Natural killer cell (primary cell): ENCODE measurements at regions of chr5 and their contacts with region 1.

Region 1: DNA sequence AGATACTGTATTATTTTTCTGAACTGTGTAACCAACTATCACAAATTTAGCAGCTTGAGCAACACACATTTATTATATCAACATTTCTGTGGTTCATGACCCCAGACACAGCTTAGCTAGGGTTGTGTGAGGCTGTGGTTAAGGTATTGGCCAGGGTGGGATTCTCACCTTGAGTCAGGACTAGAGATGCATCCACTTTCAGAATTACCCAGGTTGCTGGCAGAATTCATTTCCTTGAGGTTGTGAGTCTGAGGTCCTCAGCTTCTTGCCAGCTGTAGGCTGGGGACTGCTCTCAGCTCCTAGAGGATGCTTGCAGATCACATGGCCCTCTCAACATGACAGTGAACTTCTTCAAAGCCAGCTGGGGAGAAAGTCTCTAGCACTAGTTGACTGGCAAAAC is 122.5 kb upstream of the RASGRF2 start:
- DNase-seq: peak; percentile 15 to 41
- ATAC-seq: peak; percentile 80 to 95 (median 90)
- H3K4me3 ChIP-seq: no peak overlapping the region
- H3K4me3 Mint-ChIP-seq: peak overlapping the region; percentile 45
- H3K27ac ChIP-seq: no peak overlapping the region
- H3K27ac Mint-ChIP-seq: peak overlapping the region; percentile 67 to 77
- H3K4me1 ChIP-seq: peaks cover 15% of the 10 kb centered on the region
- H3K4me1 Mint-ChIP-seq: peaks cover 29 to 33% of the 10 kb centered on the region in 2 donors
- H3K27me3 ChIP-seq: no peaks in the 10 kb centered on the region
- H3K27me3 Mint-ChIP-seq: no peaks in the 10 kb centered on the region
- CTCF ChIP-seq: no peak

Region 2: DNA sequence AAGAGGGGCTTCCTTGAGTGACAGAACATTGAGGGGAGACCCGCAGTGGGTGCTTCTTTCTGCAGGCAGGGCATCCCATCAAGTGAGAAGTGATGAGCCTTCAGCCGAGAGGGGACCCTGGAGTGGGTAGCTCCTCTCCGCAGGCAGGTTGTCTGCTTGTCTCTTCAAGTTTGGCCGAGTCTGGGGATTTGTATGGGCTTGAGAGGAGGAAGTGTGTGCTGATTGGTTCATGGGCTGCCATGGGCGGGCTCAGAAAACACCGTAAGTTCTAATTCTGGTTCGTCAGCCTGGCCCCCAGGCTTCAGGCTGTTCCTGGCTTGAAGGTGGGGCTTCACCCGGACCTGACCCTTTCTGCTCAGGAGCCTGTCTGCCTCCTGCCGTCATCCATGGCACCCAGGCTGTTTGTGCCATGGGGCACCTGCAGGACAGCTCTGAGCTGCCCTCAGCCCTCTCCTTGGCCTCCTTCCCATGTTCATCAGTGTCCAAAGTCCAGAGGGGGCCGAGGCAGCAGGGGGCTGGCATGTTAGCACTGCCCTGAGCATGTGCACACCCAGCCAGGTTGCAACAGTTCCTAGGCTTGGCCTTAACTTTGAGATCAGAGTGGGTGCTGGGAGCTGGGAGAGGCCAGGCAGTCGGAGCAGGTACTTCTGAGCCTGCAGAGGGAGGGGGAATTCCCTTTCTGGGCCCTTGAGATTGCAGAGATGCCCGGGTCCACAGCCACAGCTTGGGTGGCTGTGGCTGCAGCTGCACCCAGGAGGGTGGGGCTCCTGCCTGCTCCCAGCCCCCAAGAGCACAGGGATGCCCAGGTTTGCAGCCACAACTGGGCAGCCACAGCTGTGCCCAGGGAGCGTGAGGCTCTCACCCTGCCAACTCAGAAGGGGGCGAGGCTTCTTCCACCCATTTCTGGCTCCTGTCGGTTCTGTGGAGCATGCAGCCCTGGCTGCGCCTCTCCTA is 169.4 kb before region 1 on chr5:
- intact Hi-C with region 1: no loop called
- DNase-seq: no peak
- ATAC-seq: no peak
- H3K4me3 ChIP-seq: no peak overlapping the region
- H3K4me3 Mint-ChIP-seq: no peak overlapping the region
- H3K27ac ChIP-seq: no peak overlapping the region
- H3K27ac Mint-ChIP-seq: no peak overlapping the region
- H3K4me1 ChIP-seq: peaks cover 3% of the 10 kb centered on the region
- H3K4me1 Mint-ChIP-seq: no peaks in the 10 kb centered on the region
- H3K27me3 ChIP-seq: no peaks in the 10 kb centered on the region
- H3K27me3 Mint-ChIP-seq: no peaks in the 10 kb centered on the region
- CTCF ChIP-seq: no peak

Region 3: GRCh38 chr5:80697100-80697499 is 140.6 kb before region 1 on chr5:
- intact Hi-C with region 1: no loop called
- DNase-seq: no peak
- ATAC-seq: no peak
- H3K4me3 ChIP-seq: no peak overlapping the region
- H3K4me3 Mint-ChIP-seq: no peak overlapping the region
- H3K27ac ChIP-seq: no peak overlapping the region
- H3K27ac Mint-ChIP-seq: no peak overlapping the region
- H3K4me1 ChIP-seq: no peaks in the 10 kb centered on the region
- H3K4me1 Mint-ChIP-seq: peaks cover 10 to 14% of the 10 kb centered on the region in 2 donors
- H3K27me3 ChIP-seq: no peaks in the 10 kb centered on the region
- H3K27me3 Mint-ChIP-seq: no peaks in the 10 kb centered on the region
- CTCF ChIP-seq: no peak

Region 4: GRCh38 chr5:80711938-80712337 is 125.7 kb before region 1 on chr5:
- intact Hi-C with region 1: loop called (anchors 10 kb)
- DNase-seq: peak in 1 of 2 donors; percentile 36
- ATAC-seq: no peak
- H3K4me3 ChIP-seq: no peak overlapping the region
- H3K4me3 Mint-ChIP-seq: no peak overlapping the region
- H3K27ac ChIP-seq: no peak overlapping the region
- H3K27ac Mint-ChIP-seq: no peak overlapping the region
- H3K4me1 ChIP-seq: peaks cover 18% of the 10 kb centered on the region
- H3K4me1 Mint-ChIP-seq: peaks cover 35 to 42% of the 10 kb centered on the region in 2 donors
- H3K27me3 ChIP-seq: no peaks in the 10 kb centered on the region
- H3K27me3 Mint-ChIP-seq: no peaks in the 10 kb centered on the region
- CTCF ChIP-seq: no peak